Prostate gland (tissue), 2 donors: ENCODE measurements at regions of chr17 and their contacts with region 1.

Region 1: DNA sequence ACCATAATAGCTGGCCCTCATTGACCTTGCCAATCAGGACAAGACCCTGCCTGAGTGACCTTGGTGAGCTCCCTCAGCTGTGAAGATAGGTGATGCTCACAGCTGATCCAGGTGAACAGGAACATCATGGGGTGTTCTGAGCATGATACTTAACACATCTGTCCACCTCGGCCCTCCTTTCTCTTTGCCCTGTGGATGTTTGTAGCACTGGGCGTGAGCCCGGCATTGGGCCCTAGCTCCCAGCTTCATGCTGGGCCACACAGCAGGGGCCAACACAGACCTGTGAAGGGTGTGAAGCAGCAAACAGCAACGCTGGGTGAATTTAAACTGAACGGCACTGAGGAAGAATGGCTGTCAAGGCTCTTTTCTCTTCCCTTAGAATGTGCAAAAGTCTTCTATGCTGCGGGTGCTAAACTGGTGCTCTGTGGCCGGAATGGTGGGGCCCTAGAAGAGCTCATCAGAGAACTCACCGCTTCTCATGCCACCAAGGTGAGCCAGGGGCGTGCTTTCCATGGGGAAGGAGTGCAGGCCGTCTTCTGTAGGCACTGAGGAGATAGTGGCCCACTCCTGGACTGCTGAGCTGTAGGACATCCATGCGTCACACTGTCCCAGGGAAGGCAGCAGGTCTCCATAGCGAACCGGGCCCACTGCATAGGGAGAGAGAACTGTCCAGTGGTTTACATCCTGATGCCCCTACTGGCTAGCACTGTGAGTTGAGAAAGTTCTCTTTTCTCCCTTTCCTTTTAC is 35.9 kb downstream of the TMEM11 start:
- DNase-seq: no peak
- H3K4me3 ChIP-seq: no peak overlapping the region
- H3K27ac ChIP-seq: no peak overlapping the region
- H3K4me1 ChIP-seq: no peaks in the 10 kb centered on the region
- H3K27me3 ChIP-seq: no peaks in the 10 kb centered on the region
- CTCF ChIP-seq: no peak
- POLR2A ChIP-seq: no peak

Region 2: GRCh38 chr17:20852239-20852989 is 325.6 kb before region 1 on chr17:
- intact Hi-C with region 1: no loop called
- DNase-seq: peak; percentile 61
- H3K4me3 ChIP-seq: peak overlapping the region; percentile 14 to 25
- H3K27ac ChIP-seq: peak overlapping the region; percentile 65 to 74
- H3K4me1 ChIP-seq: no peaks in the 10 kb centered on the region
- H3K27me3 ChIP-seq: no peaks in the 10 kb centered on the region
- CTCF ChIP-seq: no peak
- POLR2A ChIP-seq: peak; percentile 47

Region 3: DNA sequence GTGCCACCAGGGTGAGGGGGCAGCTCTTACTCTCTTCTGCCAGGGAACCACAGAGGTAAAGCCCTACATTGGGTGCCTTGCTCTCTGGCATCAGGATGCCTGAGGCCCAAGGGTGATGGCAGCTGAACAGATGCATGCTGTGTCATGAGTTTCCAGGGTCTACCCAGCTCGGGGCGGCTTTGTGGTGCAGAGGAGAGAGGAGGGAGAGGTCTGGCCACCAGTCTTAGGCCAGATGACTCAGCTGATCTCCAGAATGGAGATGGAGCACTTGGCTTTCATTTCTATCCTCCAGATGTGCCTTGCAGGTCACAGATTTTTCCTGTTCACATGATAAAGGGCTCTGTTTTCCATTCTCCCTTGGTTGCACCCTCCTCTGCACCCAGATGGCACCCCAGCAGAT is 111.6 kb before region 1 on chr17:
- intact Hi-C with region 1: no loop called
- DNase-seq: no peak
- H3K4me3 ChIP-seq: no peak overlapping the region
- H3K27ac ChIP-seq: no peak overlapping the region
- H3K4me1 ChIP-seq: no peaks in the 10 kb centered on the region
- H3K27me3 ChIP-seq: no peaks in the 10 kb centered on the region
- CTCF ChIP-seq: no peak
- POLR2A ChIP-seq: no peak

Region 4: GRCh38 chr17:21140911-21141310 is 37.1 kb before region 1 on chr17:
- intact Hi-C with region 1: no loop called
- DNase-seq: no peak
- H3K4me3 ChIP-seq: no peak overlapping the region
- H3K27ac ChIP-seq: no peak overlapping the region
- H3K4me1 ChIP-seq: no peaks in the 10 kb centered on the region
- H3K27me3 ChIP-seq: no peaks in the 10 kb centered on the region
- CTCF ChIP-seq: no peak
- POLR2A ChIP-seq: no peak

Region 5: GRCh38 chr17:21245639-21246084 is 67.6 kb after region 1 on chr17:
- intact Hi-C with region 1: loop called (anchors 2 kb)
- DNase-seq: no peak
- H3K4me3 ChIP-seq: no peak overlapping the region
- H3K27ac ChIP-seq: no peak overlapping the region
- H3K4me1 ChIP-seq: no peaks in the 10 kb centered on the region
- H3K27me3 ChIP-seq: no peaks in the 10 kb centered on the region
- CTCF ChIP-seq: no peak
- POLR2A ChIP-seq: no peak